ENCODE measurements at regions of chr21 and their contacts with region 1.

Region 1: DNA sequence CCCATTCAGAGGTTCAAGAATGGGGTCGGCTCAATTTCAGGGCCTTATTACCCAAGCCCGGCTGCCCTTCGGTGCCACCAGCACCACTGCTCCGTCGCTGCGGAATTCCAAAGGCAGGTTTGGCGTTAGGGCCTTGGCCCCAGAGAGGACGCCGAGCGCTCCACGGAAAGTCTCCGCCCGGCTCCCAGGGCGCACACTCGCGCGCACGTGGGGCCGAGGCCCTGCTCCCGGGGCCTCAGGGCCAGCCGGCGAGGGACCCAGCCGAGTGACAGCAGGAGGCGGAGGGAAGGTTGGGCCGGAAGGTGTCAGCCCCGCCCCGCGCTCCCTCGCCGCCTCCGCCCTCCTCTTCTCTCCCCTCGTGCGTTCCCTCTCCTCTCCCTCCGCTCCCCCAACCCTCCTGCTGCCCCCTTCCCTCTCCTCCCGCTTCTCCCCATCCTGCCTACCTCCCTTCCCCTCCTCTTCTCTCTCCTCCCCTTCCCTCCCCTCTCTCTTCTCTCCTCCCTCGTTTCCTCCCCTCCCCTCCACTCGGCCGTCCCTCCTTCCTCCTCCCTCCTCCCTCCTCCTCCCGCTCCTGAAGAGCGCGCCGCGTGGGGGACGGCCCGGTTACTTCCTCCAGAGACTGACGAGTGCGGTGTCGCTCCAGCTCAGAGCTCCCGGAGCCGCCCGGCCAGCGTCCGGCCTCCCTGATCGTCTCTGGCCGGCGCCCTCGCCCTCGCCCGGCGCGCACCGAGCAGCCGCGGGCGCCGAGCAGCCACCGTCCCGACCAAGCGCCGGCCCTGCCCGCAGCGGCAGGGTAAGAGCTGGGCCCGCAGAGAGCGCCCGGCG is at the start of gene ETS2:
- DNase-seq: peak; percentile 94
- H3K4me3 ChIP-seq: peak within 1 kb of the TSS; percentile 87
- H3K27ac ChIP-seq: peak within 1 kb of the TSS; percentile 88
- H3K4me1 ChIP-seq: peaks cover 19% of the 10 kb centered on the region
- H3K27me3 ChIP-seq: no peaks in the 10 kb centered on the region
- CTCF ChIP-seq: no peak
- total RNA-seq, gene ETS2: 35.1 and 45.6 TPM in 2 replicates

Region 2: DNA sequence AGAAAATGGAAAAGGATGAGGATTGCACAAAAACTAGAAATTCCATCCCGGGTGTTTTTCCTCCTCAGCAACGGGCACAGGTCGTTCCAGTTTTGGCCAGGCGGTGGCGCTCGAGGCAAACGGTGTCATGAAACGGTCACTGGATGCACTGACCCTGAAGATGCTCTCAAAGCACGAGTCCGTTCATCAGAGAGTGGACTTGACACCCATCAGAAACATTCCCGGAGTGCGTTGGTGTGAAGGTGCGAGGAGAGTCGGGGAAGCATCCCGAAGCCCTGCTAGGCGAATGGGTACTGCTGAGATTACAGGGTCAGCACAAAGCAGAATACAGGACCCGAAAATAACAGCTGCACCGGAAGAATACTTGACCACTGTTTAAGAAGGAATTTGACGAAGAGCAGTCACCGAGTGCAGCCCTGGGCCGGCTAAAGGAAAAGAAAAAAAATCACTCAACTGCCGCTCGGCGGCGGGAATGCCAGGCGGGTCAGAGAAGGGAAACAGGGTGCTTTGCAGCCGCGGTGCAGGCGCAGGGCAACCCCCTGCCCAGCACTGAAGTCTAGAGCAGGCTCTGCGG is 71.5 kb before region 1 on chr21:
- CTCF ChIA-PET with region 1: no interaction called
- POLR2A ChIA-PET with region 1: no interaction called
- intact Hi-C with region 1: loop called (anchors 5 kb)
- DNase-seq: peak; percentile 64
- H3K4me3 ChIP-seq: peak overlapping the region; percentile 37
- H3K27ac ChIP-seq: no peak overlapping the region
- H3K4me1 ChIP-seq: peaks cover 8% of the 10 kb centered on the region
- H3K27me3 ChIP-seq: peaks cover 11% of the 10 kb centered on the region
- CTCF ChIP-seq: peak; percentile 95

Region 3: GRCh38 chr21:38861989-38862683 is 56.6 kb after region 1 on chr21:
- CTCF ChIA-PET with region 1: no interaction called
- POLR2A ChIA-PET with region 1: no interaction called
- intact Hi-C with region 1: no loop called
- DNase-seq: no peak
- H3K4me3 ChIP-seq: no peak overlapping the region
- H3K27ac ChIP-seq: no peak overlapping the region
- H3K4me1 ChIP-seq: no peaks in the 10 kb centered on the region
- H3K27me3 ChIP-seq: no peaks in the 10 kb centered on the region
- CTCF ChIP-seq: no peak